ENCODE measurements at regions of chr12 and their contacts with region 1.

Region 1: GRCh38 chr12:65756956-65757511 is 67.2 kb upstream of the HMGA2 start:
- DNase-seq: peak in 1 of 2 experiments; percentile 94
- H3K4me3 ChIP-seq: no peak overlapping the region
- H3K27ac ChIP-seq: peak overlapping the region; percentile 60
- H3K4me1 ChIP-seq: peaks cover 27% of the 10 kb centered on the region
- H3K27me3 ChIP-seq: no peaks in the 10 kb centered on the region
- CTCF ChIP-seq: no peak

Region 2: DNA sequence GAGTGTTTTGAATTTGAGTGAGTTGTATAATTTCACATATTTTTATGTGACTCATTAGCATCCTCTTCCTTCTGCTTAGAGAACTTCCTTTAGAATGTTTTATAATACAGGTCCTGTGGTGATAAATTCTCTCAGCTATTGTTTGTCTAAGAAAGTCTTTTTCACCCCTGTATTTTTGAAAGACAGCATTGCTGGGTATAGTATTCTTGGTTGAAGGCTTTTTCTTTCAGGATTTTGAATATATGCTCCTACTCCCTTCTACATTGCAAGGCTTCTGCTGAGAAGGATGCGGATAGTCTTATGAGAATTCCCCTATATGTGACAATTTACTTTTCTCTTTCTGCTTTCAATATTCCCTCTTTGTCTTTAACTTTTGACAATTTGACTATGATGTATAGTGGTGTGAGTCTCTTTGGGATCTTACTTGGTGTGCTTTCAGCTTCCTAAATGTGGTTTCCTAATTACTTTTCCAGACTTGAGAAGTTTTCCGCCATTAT is 51.6 kb before region 1 on chr12:
- CTCF ChIA-PET with region 1: no interaction called
- POLR2A ChIA-PET with region 1: no interaction called
- intact Hi-C with region 1: no loop called
- DNase-seq: no peak
- H3K4me3 ChIP-seq: no peak overlapping the region
- H3K27ac ChIP-seq: no peak overlapping the region
- H3K4me1 ChIP-seq: no peaks in the 10 kb centered on the region
- H3K27me3 ChIP-seq: no peaks in the 10 kb centered on the region
- CTCF ChIP-seq: no peak

Region 3: GRCh38 chr12:65800937-65801336 is 43.9 kb after region 1 on chr12:
- CTCF ChIA-PET with region 1: no interaction called
- POLR2A ChIA-PET with region 1: interaction called, 11 read pairs
- intact Hi-C with region 1: no loop called
- DNase-seq: no peak
- H3K4me3 ChIP-seq: no peak overlapping the region
- H3K27ac ChIP-seq: no peak overlapping the region
- H3K4me1 ChIP-seq: no peaks in the 10 kb centered on the region
- H3K27me3 ChIP-seq: no peaks in the 10 kb centered on the region
- CTCF ChIP-seq: no peak

Measured in PC-9 (cell line).